BJ (cell line): ENCODE measurements at regions of chr16 and their contacts with region 1.

Region 1: DNA sequence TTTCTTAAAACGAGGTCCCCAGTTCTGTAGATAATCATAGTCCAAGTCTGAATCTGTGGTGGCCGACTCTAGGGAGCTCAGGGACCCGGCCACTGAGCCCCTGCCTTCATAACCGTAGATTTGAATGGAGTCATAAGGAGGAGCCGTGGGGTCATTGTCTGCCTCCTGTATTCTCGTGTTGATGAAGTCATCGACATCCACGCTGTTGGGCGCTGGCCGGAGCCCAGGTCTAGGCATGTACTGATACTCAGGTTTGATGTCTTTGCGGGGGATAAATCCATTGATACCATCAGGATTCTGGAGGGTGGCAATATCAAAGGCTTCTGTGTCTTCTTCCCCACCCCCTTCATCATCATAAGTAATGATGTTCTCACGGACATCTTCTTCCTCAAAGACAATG is 174.2 kb downstream of the CDH11 start:
- DNase-seq: no peak
- H3K4me3 ChIP-seq: no peak overlapping the region
- H3K27me3 ChIP-seq: no peaks in the 10 kb centered on the region
- CTCF ChIP-seq: no peak

Region 2: GRCh38 chr16:63473725-63474124 is 1473.9 kb before region 1 on chr16:
- CTCF ChIA-PET with region 1: no interaction called
- POLR2A ChIA-PET with region 1: interaction called, 10 read pairs
- DNase-seq: no peak
- H3K4me3 ChIP-seq: no peak overlapping the region
- H3K27me3 ChIP-seq: no peaks in the 10 kb centered on the region
- CTCF ChIP-seq: no peak

Region 3: DNA sequence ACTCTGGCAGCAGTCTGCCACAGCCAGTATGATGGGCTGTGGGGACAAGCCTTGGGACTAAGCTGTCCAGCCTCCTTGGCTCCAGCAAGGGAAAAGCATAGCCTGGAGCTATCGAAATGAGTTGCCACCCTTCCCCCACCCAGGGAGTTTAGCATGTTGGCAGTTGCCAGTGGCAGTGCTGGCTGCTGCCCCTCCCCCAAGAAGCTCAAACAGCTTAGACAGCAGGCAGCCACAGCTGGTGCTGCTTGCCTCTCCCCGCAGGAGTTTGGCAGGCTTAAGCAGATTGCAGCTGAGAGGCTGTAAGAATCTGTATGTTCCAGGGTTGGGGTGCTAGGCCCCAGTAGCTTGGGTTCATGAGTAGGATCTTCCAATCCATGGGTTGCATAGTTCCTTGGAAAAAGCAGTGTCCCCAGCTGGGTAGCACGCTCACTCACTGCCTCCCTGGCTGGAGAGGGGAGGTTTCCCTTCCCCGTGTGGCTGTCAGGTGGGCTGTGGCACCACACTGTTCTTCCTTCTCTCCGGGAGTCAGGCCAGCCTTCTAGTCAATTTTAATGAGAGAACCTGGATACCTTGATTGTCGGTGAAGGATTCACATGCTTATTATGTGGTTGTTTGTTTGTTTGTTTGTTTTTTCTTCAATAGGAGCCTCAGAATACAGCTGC is 331.9 kb before region 1 on chr16:
- CTCF ChIA-PET with region 1: no interaction called
- POLR2A ChIA-PET with region 1: no interaction called
- DNase-seq: no peak
- H3K4me3 ChIP-seq: no peak overlapping the region
- H3K27me3 ChIP-seq: no peaks in the 10 kb centered on the region
- CTCF ChIP-seq: no peak

Region 4: DNA sequence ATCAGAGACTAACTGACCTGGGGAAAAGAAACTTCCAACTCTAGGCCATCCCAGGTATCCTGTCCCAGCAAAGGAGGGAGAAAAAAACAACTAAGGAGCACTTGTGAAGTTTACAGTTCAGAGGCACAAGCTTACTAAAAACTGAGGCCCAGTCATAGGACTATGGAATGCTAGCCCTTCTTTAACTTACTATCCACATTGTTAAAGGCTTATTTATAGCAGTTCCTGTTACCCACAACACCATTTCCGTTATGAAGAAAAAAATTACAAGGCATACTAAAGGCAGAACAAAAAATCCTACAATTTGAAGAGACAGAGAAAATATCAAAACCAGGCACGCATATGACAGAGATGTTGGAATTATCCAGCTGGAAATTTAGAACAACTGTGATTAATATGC is 15.1 kb after region 1 on chr16:
- CTCF ChIA-PET with region 1: no interaction called
- POLR2A ChIA-PET with region 1: no interaction called
- DNase-seq: no peak
- H3K4me3 ChIP-seq: no peak overlapping the region
- H3K27me3 ChIP-seq: no peaks in the 10 kb centered on the region
- CTCF ChIP-seq: no peak